Dorsolateral prefrontal cortex (tissue), 120 donors: ENCODE measurements at regions of chr2 and their contacts with region 1.

Region 1: GRCh38 chr2:157302492-157303099 is 23.0 kb downstream of the ERMN start:
- DNase-seq: peak in 1 of 10 donors; percentile 38
- H3K4me3 ChIP-seq: peak overlapping the region in 14 of 59 donors; percentile 8 to 52 (median 21)
- H3K27ac ChIP-seq: peak overlapping the region in 10 of 59 donors; percentile 14 to 80 (median 37)
- H3K27me3 ChIP-seq: peaks cover 0 to 8% (median 0%) of the 10 kb centered on the region in 45 donors
- CTCF ChIP-seq: peak; percentile 77 to 99 (median 90)

Region 2: DNA sequence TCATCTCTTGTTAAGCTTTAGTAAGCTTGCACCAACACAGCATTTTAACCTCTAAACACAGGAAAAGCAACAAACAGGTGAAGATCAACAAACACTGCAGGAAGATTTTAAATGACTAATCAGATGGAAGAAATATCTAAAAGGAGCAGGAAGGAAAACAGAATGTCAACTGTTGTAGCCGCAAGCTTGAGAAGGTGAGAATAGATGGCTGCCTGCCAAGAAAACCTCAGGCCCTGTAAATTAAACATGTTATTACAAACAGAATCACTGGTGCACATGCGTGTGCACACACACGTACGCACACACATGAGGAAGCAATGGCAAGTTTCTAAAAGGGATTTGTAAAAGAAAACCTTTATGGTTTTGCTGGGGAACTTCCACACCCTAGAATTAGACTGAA is 302.9 kb before region 1 on chr2:
- intact Hi-C with region 1: no loop called
- DNase-seq: no peak
- H3K4me3 ChIP-seq: no peak overlapping the region
- H3K27ac ChIP-seq: no peak overlapping the region
- H3K27me3 ChIP-seq: no peaks in the 10 kb centered on the region
- CTCF ChIP-seq: no peak

Region 3: DNA sequence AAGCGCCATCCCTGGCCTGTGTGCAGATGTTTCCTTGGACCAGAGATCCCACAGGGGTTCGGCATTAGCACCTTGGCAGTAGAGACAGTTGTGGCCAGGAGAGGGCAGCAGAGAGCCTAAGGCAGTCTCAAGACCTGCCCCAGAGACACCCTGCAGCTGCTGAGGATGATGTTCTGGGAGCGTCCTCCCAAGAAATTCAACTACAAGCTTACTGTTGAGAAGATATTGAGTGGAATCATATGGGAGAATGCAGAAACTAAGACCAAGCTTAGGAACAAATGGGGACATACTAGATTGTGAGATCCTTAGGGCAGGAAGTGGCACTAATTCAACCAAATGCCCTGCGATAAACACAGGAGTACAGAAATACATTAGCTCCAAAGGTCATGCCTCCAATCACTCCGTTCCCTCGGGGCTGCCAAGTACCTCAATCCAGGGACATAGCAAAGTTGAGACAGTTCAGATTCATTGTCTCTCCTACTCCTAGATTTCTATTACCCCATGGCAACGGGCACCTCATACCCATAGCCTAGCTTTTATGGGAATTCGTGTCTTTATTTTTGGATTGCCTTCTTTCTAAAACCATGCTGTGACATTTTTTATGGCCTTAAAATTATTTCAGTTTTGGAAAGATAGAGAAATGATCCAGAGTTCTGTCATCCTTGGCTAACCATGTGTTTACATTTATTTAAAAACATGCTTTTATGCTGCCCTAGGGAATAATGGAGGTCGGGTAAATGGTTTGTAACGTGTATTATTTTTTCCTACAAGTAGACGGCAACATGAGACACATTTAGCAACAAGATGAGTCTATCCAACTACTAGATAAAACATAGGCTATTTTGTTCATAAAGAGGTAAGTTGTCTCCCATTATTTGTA is 25.3 kb after region 1 on chr2:
- intact Hi-C with region 1: loop called in 1 of 2 experiments (anchors 2 kb)
- DNase-seq: peak; percentile 36 to 95 (median 86)
- H3K4me3 ChIP-seq: peak overlapping the region in 57 of 59 donors; percentile 1 to 79 (median 58)
- H3K27ac ChIP-seq: peak overlapping the region; percentile 55 to 99 (median 94)
- H3K27me3 ChIP-seq: no peaks in the 10 kb centered on the region
- CTCF ChIP-seq: peak; percentile 60 to 97 (median 90)